Pancreas (tissue), 10 donors: ENCODE measurements at regions of chr17 and their contacts with region 1.

Region 1: GRCh38 chr17:64411999-64412771 is 21.5 kb upstream of the PECAM1 start:
- DNase-seq: peak in 1 of 6 donors; percentile 43
- ATAC-seq: peak in 3 of 4 donors; percentile 53 to 78 (median 75)
- H3K4me3 ChIP-seq: peak overlapping the region in 1 of 4 donors; percentile 0
- H3K27ac ChIP-seq: peak overlapping the region in 1 of 4 donors; percentile 20
- H3K4me1 ChIP-seq: no peaks in the 10 kb centered on the region
- H3K27me3 ChIP-seq: no peaks in the 10 kb centered on the region
- CTCF ChIP-seq: no peak

Region 2: GRCh38 chr17:64320613-64321553 is 91.3 kb before region 1 on chr17:
- intact Hi-C with region 1: loop called in 2 of 3 experiments (anchors 5 kb)
- DNase-seq: peak in 3 of 6 donors; percentile 36 to 58 (median 45)
- ATAC-seq: peak; percentile 58 to 94 (median 86)
- H3K4me3 ChIP-seq: no peak overlapping the region
- H3K27ac ChIP-seq: no peak overlapping the region
- H3K4me1 ChIP-seq: no peaks in the 10 kb centered on the region
- H3K27me3 ChIP-seq: no peaks in the 10 kb centered on the region
- CTCF ChIP-seq: peak; percentile 57 to 78 (median 75)